ENCODE measurements at regions of chr19 and their contacts with region 1.

Region 1: DNA sequence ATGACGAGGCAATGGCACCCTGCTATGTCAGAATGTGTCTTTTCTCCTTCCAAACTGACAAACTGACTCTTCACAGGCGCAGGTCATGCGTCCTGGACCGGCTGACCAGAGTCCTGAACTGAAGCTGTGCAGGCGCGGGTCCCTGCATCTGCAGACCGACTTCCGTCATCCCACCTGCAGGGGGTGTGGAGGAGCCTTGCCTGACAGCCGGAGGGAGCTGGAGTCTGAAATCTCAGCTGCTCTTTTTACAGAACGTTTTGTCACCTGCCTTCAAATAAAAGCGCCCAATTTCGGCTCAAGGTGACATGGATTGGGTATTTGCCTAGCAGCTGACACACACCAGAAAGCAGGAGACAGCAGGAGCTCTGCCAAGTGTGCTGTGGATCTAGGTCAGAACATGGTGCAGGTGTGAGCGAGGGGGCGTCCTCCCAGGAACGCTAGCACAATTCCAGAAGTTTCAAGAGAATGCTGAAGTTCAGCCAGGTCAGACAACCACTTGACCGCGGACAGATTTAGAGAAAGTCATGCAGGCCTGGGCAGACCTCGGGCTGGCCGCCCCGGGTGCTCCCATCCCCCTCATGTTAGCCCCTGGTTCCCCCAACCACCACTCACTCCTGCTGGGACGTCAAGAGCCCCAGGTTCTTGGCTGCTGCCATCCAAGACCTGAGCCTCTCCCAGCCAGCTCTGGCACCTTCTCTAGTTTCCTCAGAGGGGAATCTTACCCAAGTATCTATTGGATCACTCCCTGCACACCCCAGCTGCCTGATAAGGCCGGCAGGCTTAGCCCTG is 32.8 kb downstream of the ELL start:
- H3K4me3 ChIP-seq: no peak overlapping the region
- H3K27ac ChIP-seq: no peak overlapping the region
- H3K4me1 ChIP-seq: peaks cover 10% of the 10 kb centered on the region
- CTCF ChIP-seq: peak; percentile 47; the same call in 1 of the 2 replicates

Region 2: DNA sequence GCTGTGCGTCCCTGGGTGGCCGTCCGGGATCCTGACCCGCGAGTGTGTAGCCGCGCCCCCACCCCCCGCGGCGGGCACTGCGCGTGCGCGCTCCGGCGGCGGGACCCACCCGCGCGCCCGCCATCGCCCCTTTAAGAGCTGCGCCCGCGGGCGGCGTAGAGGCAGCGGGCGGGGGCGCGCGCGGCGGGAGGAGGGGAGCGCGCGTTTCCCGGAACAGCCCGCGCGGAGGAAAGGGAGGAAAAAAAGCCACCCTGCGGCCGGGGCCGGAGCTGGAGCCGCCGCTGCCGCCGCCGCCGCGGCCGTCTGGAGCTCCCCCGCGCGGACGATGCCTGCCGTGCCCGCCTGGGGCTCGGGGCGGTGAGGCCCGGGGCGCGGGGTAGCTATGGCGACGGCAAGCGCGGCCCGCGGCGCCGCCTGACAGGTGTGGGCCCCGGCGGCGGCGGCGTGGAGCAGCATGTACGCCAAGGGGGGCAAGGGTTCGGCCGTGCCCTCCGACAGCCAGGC is 69.8 kb before region 1 on chr19 and contains the start of gene SSBP4:
- CTCF ChIA-PET with region 1: no interaction called
- POLR2A ChIA-PET with region 1: no interaction called
- H3K4me3 ChIP-seq: peak within 1 kb of the TSS; percentile 53
- H3K27ac ChIP-seq: peak within 1 kb of the TSS; percentile 63; the same call in 1 of the 2 replicates
- H3K4me1 ChIP-seq: peaks cover 9% of the 10 kb centered on the region; the same call in 1 of the 2 replicates
- CTCF ChIP-seq: no peak

Region 3: DNA sequence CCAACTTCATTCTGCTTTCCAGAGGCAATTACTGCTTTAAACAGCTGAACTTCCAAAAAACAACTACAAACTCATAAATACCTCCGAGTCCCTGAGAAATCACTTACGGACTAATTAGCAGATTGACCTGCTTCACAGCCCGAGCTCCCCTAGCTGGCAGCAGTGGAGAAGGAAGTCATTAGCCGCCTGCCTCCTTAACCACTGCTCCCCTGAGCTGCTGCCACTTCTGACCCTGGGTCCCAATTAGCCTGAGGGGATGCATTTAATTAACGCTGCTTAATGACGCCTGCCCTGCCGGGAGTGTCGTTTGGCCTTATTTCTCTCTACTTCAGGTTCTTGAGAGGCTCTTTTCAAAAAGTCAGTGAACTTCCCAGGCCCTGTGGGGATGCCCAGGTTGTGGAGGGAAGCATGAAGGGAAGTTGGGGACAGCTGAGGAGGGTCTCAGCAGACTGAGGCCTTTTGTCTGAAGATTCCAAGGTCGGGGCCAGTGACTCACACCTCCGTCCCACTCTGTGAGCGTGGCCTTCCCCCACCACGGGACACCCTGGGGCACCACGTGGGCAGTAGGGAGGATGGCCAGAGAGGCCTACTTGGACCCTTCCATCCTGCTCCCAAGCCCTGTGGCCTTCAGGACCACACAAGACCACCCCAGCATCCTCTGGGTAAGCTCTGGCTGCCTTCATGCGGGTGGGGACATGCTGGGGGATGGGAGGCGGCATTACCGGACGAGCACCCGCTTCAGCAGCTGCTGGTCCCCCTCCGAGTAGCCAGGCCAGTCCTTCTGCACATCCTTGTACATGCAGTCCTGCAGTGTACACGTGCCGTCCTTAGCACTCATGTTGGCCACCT is 31.3 kb before region 1 on chr19:
- CTCF ChIA-PET with region 1: interaction called, 11 read pairs
- POLR2A ChIA-PET with region 1: no interaction called
- H3K4me3 ChIP-seq: no peak overlapping the region
- H3K27ac ChIP-seq: no peak overlapping the region
- H3K4me1 ChIP-seq: no peaks in the 10 kb centered on the region
- CTCF ChIP-seq: no peak

Region 4: DNA sequence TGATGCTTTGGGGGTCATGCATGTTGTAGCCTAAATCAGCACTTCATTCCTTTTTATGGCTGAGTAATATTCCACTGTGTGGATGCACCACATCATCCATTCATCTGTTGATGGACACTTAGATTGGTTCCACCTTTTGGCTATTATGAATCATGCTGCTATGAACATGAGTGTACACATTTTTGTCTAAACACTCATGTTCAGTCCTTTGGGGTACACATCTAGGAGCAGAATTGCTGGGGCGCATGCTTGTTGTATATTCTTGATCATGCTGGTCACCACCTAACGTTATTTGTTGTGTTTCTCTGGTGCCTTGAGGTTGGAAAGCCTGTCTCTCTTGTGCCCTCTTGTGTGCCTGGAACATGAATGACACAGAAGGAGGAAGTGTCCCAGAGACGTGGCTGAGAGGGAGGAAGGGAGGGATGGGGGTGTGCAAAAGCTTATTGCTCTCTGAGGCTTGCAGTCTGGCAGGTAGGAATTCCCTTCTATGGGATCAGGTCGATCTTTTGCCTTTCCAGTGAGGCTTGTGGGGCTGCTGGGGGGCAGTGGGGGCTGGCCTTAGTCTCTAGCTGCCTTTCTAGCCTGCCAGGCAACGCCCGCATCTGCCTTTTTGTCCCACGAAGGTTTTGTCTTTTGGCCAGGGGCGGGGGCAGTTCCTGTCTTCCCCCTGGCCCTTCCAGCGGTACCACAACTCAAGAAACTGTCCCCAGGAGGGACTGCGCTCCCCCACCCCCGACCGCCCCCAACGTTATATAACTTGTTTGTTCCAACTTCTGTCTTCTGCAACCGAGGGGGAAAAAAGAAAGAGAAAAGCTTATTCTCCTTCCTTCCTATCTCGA is 155.4 kb after region 1 on chr19:
- CTCF ChIA-PET with region 1: no interaction called
- POLR2A ChIA-PET with region 1: no interaction called
- H3K4me3 ChIP-seq: no peak overlapping the region
- H3K27ac ChIP-seq: no peak overlapping the region
- H3K4me1 ChIP-seq: no peaks in the 10 kb centered on the region
- CTCF ChIP-seq: no peak

Measured in HEK293 (cell line).